OCI-LY7 (cell line): ENCODE measurements at regions of chr6 and their contacts with region 1.

Region 1: GRCh38 chr6:30717042-30717844 is at the start of gene MDC1:
- DNase-seq: peak; percentile 100
- H3K4me3 ChIP-seq: peak within 1 kb of the TSS; percentile 91
- H3K27ac ChIP-seq: peak within 1 kb of the TSS; percentile 97
- H3K4me1 ChIP-seq: peaks cover 44% of the 10 kb centered on the region
- CTCF ChIP-seq: no peak; the same call in 1 of the 2 replicates
- total RNA-seq, gene MDC1: 35.0 and 41.6 TPM in 2 replicates

Region 2: GRCh38 chr6:30556066-30556905 is 161.0 kb before region 1 on chr6 and contains the start of gene GNL1:
- CTCF ChIA-PET with region 1: no interaction called
- POLR2A ChIA-PET with region 1: no interaction called
- intact Hi-C with region 1: loop called (anchors 5 kb)
- DNase-seq: peak; percentile 97
- H3K4me3 ChIP-seq: peak within 1 kb of the TSS; percentile 84
- H3K27ac ChIP-seq: peak within 1 kb of the TSS; percentile 89
- H3K4me1 ChIP-seq: peaks cover 18% of the 10 kb centered on the region
- CTCF ChIP-seq: no peak
- total RNA-seq, gene GNL1: 51.2 and 66.4 TPM in 2 replicates

Region 3: DNA sequence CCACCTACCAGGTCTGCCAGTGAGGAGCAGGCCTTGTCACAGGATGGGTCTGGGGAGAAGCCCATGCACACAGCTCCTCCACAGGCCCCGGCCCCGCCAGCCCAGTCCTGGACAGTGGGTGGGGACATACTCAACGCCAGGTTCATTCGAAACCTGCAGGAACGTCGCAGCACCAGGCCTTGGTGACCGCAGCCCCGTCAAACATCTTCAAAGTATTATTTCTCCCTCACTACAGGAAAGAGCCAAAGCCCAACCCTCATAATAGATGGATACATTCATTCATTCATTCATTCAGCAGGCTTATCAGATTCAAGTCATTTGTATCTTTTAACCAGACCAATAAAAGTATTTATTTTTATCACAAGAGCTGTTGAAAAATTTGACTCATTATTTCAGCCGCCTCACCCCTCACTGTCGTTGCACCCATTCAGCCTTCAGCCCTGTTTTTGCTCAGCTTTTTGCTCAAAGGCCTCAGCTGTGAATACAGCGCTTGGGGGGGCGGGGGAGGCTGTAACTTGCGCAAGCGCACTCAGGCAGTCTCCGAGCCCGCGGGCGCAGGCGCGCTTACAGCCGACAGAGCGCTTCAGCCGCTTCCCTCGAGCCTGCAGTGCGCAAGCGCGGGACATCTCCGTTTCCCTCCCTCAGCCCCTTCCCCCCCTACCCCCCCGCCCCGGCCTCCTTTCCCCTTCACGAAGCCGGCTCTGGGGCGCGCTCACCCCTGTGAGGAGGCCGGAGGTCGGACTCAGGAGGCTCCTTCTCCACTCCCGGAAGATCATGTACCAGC is 70.6 kb before region 1 on chr6 and contains the start of gene C6orf136:
- CTCF ChIA-PET with region 1: no interaction called
- POLR2A ChIA-PET with region 1: interaction called, 4 read pairs
- intact Hi-C with region 1: loop called (anchors 1 kb)
- DNase-seq: peak; percentile 97
- H3K4me3 ChIP-seq: peak within 1 kb of the TSS; percentile 93
- H3K27ac ChIP-seq: peak within 1 kb of the TSS; percentile 77
- H3K4me1 ChIP-seq: peaks cover 16% of the 10 kb centered on the region
- CTCF ChIP-seq: no peak
- total RNA-seq, gene C6orf136: 9.1 and 14.7 TPM in 2 replicates

Region 4: DNA sequence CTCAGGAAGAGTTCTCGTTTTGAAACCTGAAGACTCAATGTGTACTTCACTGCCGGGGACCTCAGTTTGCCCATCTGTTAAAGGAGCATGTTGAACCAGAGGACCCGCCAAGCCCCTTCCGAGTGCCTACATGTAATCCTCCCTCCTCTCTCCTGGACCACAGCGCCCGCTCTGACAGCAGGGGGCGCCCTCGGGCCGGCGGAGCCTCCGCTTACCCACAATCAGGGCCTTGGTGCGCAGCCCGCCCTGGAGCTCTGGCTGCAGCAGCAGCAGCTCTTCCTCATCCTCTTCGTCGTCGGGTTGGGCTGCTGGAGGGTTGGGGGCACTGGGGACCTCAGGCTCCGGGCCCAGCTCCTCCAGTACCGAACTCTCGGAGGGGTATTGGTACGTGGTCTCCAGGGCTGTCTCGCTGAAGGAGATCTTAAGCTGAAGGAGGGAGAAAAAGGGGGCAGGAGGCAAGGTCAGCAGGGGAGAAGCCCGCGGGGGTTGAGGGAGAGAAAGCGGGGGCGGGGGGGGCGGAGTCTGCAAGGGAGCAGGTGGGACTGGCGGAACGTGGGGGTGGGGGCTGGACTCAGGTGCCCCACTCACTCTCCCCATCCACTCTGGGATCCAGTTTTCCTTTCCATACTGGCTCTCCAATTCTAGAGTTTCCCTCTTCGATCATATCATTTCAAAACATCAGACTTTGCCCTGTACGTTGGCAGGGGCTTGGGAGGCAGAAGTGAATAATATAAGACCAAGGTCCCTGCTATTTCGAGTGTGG is 38.1 kb before region 1 on chr6:
- CTCF ChIA-PET with region 1: interaction called, 7 read pairs
- POLR2A ChIA-PET with region 1: interaction called, 14 read pairs
- intact Hi-C with region 1: loop called (anchors 1 kb)
- DNase-seq: peak; percentile 89
- H3K4me3 ChIP-seq: peak overlapping the region; percentile 95
- H3K27ac ChIP-seq: peak overlapping the region; percentile 78
- H3K4me1 ChIP-seq: peaks cover 30% of the 10 kb centered on the region
- CTCF ChIP-seq: peak; percentile 97

Region 5: GRCh38 chr6:30686908-30687658 is 30.2 kb before region 1 on chr6:
- CTCF ChIA-PET with region 1: interaction called, 5 read pairs
- POLR2A ChIA-PET with region 1: interaction called, 71 read pairs
- intact Hi-C with region 1: loop called (anchors 1 kb)
- DNase-seq: peak; percentile 98
- H3K4me3 ChIP-seq: peak overlapping the region; percentile 95
- H3K27ac ChIP-seq: peak overlapping the region; percentile 95
- H3K4me1 ChIP-seq: peaks cover 34% of the 10 kb centered on the region
- CTCF ChIP-seq: no peak

Region 6: DNA sequence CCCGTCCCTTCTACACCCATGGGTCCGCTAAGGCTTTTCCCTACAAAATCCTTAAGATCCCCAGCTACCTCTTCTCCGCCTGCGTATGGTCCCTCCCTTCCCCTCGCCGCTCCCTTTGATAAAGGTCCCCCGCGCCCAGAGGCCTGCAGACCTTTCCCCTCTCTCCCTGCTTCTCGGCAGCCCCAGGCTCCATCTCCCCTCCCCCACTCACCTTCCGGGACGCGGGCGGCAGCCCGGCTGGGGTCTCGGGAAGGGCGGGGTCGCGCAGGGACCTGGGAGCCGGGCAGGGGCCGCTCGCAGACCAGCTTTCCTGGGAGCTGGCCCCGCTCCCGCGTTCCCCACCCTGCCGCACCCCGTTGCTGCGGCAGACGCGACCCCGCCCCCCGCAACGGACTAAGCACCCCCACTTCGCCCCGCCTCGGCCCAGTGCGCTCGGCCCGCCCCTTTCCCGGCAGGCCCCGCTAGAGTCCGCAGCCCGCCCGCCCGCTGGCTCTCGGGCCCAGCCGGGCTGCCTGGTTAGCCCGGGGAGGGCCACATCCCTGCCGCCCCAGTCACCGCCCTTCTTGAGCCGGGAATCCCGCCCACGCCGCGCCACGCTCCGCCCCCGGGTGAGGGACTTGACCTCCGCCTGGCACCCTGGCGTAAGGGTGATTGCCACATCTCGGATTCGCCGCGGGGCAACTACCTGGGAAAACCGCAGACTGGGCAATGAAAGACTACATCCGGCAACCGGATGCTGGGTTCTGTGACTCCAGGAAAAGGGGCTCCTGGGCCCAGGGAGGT is 25.3 kb after region 1 on chr6 and contains the start of gene FLOT1:
- CTCF ChIA-PET with region 1: no interaction called
- POLR2A ChIA-PET with region 1: interaction called, 4 read pairs
- intact Hi-C with region 1: loop called (anchors 1 kb)
- DNase-seq: peak; percentile 84
- H3K4me3 ChIP-seq: peak within 1 kb of the TSS; percentile 91
- H3K27ac ChIP-seq: peak within 1 kb of the TSS; percentile 50
- H3K4me1 ChIP-seq: peaks cover 31% of the 10 kb centered on the region
- CTCF ChIP-seq: 0 out of 2 replicates have a peak, but pooled peaks have one; percentile 23
- total RNA-seq, gene FLOT1: 66.7 and 70.7 TPM in 2 replicates

Region 7: DNA sequence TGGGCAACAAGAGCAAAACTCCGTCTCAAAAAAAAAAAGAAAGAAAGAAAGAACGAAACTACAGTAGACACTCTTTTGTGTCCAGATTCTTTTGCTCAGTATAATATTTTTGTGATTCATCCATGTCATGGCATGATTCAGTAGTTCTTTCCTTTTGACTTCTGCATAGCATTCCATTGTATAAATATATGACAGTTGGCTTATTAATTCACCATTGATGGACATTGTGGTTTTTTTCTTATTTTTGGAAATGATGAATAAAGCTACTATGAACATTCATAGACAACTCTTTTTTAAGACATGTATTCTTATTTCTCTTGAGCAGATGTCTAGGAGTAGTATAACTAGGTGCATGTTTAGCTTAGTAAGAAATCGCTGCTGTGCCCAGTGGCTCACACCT is 37.4 kb after region 1 on chr6:
- CTCF ChIA-PET with region 1: no interaction called
- POLR2A ChIA-PET with region 1: no interaction called
- intact Hi-C with region 1: no loop called
- DNase-seq: no peak
- H3K4me3 ChIP-seq: no peak overlapping the region
- H3K27ac ChIP-seq: no peak overlapping the region
- H3K4me1 ChIP-seq: peaks cover 8% of the 10 kb centered on the region
- CTCF ChIP-seq: no peak

Region 8: GRCh38 chr6:30926644-30927043 is 209.4 kb after region 1 on chr6:
- CTCF ChIA-PET with region 1: no interaction called
- POLR2A ChIA-PET with region 1: no interaction called
- intact Hi-C with region 1: no loop called
- DNase-seq: no peak
- H3K4me3 ChIP-seq: no peak overlapping the region
- H3K27ac ChIP-seq: no peak overlapping the region
- H3K4me1 ChIP-seq: no peaks in the 10 kb centered on the region
- CTCF ChIP-seq: no peak